ENCODE measurements at regions of chr12 and their contacts with region 1.

Region 1: DNA sequence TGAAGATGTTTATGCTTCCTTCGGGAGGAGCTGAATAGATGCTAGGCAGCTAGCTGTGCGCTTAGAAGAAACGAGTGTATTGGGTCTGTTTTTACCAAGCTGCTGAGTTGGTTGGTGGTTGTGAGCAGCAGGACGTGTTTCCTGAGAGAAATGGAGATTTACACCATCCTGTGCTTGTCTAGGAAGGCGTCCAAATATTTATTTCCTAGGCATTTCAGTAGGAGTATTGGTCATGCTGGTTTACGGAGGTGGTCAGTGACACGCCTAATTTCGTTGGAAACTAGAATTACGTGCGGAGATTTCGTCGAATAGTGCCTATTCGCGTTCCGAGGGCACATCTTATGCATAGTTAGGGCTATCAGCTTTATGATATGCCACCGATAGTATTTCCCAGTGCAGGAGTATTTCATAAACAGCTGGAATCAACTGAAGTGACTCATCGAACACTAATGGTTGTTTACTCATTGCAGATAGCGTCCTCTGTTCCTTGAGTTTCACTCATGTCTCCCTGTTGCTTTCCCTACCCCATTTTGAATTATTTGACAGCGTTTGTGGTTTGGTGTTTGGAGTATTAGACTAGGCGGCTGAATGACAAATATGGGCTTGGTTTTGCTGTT is 780 bp downstream of the TBC1D15 start:
- DNase-seq: no peak
- H3K4me3 ChIP-seq: peak overlapping the region; percentile 66
- CTCF ChIP-seq: no peak
- POLR2A ChIP-seq: no peak

Region 2: DNA sequence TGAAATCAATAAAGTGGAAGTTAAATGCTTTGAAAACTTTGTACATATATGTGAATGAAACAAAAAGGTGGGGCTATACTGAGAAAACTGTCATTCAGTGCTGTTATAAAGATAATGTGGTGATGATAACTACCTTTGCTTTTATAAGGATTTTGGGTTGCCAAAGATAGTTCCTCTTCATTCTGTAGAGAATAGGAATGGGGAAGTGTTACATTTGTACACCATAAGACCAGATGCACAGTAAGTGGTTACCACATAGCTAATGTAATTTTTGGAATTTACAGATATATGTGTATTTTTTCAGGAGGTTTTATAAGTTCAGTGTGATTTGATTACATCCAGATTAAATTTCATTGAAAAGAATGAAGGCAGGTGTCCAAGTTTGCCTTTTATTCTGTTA is 67.6 kb before region 1 on chr12:
- intact Hi-C with region 1: loop called (anchors 10 kb)
- DNase-seq: no peak
- H3K4me3 ChIP-seq: no peak overlapping the region
- CTCF ChIP-seq: no peak
- POLR2A ChIP-seq: no peak

Region 3: DNA sequence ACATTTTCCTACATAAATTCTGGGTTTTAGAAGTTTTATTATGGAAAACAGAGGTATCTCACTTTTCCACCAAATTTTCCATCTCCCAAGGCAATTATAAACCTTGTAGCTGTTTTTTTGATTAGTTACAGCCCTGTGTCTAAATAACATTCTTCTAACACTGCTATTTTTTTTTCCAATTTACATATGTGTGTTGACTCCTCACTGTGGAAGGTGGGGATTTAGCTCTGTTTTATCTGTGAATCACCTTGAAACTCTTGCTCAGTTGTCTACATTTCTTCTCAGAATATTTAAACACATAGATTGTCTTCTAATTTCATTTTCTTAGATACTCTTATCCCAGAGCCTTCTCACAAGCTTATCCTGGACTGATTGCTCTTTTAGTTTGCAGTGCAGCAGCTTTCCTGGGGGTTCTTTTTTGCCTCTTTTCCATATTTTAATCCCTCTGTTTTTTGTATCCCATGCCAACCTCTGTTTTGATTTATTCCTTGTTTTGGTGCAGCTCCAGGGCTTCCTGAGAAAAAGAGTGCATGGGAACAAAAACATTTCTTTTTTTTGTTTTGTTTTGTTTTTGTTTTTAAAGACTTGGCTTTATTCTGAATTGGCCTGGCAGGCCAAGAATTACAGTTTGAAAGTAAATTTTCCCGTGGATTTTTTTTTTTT is 35.9 kb after region 1 on chr12:
- intact Hi-C with region 1: no loop called
- DNase-seq: no peak
- H3K4me3 ChIP-seq: no peak overlapping the region
- CTCF ChIP-seq: no peak
- POLR2A ChIP-seq: no peak